H1 (cell line): ENCODE measurements at regions of chr3 and their contacts with region 1.

Region 1: GRCh38 chr3:193335031-193335430 is 43.5 kb downstream of the ATP13A5 start:
- DNase-seq: no peak
- H3K4me3 ChIP-seq: no peak overlapping the region
- H3K27ac ChIP-seq: no peak overlapping the region
- H3K4me1 ChIP-seq: no peaks in the 10 kb centered on the region
- H3K27me3 ChIP-seq: no peaks in the 10 kb centered on the region
- CTCF ChIP-seq: no peak
- EP300 ChIP-seq: no peak
- POLR2A ChIP-seq: no peak
- RAD21 ChIP-seq: no peak

Region 2: DNA sequence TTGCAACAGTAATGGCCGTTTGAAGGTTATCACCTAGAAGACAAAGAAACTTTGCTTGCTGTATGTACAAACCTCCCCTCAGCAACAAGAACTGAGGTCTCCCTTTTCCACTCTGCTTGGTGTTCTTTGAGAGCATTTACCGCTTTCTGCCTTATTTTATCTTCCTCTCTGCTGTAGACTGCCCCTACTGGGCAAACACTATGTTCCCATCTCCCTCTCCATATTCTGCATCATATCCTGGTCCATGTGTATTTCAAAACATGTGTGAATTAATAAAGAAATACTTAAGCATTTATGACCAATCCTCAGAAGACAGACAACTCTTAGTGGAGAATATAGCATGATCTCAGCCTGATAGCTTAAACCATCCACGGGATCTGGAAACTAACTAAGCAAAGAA is 20.9 kb before region 1 on chr3:
- CTCF ChIA-PET with region 1: interaction called, 20 read pairs
- POLR2A ChIA-PET with region 1: no interaction called
- DNase-seq: no peak
- H3K4me3 ChIP-seq: no peak overlapping the region
- H3K27ac ChIP-seq: no peak overlapping the region
- H3K4me1 ChIP-seq: peaks cover 0 to 8% (median 3%) of the 10 kb centered on the region in 4 experiments; a peak in 4 of 7 replicates
- H3K27me3 ChIP-seq: no peaks in the 10 kb centered on the region
- CTCF ChIP-seq: peak in 2 of 3 experiments; percentile 7 to 52; a peak in 2 of 4 replicates
- EP300 ChIP-seq: no peak
- POLR2A ChIP-seq: no peak
- RAD21 ChIP-seq: peak; percentile 15 to 29; a peak in 2 of 4 replicates